Aorta (tissue), 5 donors: ENCODE measurements at regions of chr1 and their contacts with region 1.

Region 1: DNA sequence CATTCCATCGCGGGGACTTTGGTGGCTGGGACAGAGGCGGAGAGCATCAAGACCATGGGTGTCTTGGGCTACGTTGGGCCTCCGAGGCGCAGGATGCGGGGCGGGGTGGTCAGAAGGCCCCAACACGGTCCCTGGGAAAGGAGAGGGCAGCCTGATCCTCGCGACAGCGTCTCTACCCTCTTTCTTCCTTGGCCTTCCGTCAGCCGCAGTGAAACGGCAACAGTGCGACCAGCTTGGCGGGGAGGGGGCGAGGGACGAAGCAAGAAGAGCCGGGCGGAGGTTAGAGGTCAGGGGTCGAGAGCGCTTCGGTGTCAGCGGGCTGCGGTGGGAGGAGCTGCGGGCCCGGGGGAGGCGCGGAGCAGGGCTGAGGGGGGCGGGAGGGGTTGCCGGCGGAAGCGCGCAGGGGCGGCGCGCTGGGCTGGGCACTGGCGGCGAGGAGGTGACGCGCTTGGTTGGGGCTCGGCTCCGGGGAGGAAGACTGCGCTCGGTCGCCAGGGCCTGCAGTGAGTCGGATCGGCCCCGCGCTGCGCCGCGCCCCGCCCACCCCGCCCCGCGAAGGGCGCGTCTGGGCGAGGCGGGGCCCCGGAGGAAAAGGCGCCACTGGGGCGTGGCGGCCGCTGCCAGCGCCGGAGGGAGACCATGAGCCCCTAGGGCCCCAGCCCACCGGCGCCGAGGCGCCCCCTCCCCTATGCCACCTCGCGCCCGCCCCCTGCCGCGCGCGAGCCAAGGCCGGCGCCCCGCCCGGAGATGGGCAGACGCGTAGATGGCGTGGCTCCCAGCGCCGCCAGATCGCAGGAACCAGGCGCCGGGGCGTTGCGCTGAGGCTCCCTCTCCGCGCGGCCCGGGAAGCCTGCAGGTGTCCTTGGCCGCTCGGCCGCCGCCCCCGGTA is at the start of gene KCNC4:
- DNase-seq: peak; percentile 96 to 97
- ATAC-seq: peak; percentile 92
- H3K4me3 ChIP-seq: peak within 1 kb of the TSS; percentile 87 to 88
- H3K27ac ChIP-seq: peak within 1 kb of the TSS; percentile 32 to 85
- H3K4me1 ChIP-seq: no peaks in the 10 kb centered on the region
- H3K27me3 ChIP-seq: no peaks in the 10 kb centered on the region
- total RNA-seq, gene KCNC4: 18.2 to 22.6 TPM

Region 2: GRCh38 chr1:109722908-109723691 is 486.9 kb before region 1 on chr1:
- intact Hi-C with region 1: no loop called
- DNase-seq: no peak
- ATAC-seq: no peak
- H3K4me3 ChIP-seq: no peak overlapping the region
- H3K27ac ChIP-seq: no peak overlapping the region
- H3K4me1 ChIP-seq: no peaks in the 10 kb centered on the region
- H3K27me3 ChIP-seq: no peaks in the 10 kb centered on the region

Region 3: GRCh38 chr1:110118636-110119615 is 91.0 kb before region 1 on chr1:
- intact Hi-C with region 1: no loop called
- DNase-seq: peak in 1 of 2 donors; percentile 22
- ATAC-seq: no peak
- H3K4me3 ChIP-seq: no peak overlapping the region
- H3K27ac ChIP-seq: no peak overlapping the region
- H3K4me1 ChIP-seq: no peaks in the 10 kb centered on the region
- H3K27me3 ChIP-seq: no peaks in the 10 kb centered on the region

Region 4: GRCh38 chr1:110245876-110246620 is 36.1 kb after region 1 on chr1:
- intact Hi-C with region 1: loop called in 1 of 2 experiments (anchors 1 kb)
- DNase-seq: peak in 1 of 2 donors; percentile 37
- ATAC-seq: no peak
- H3K4me3 ChIP-seq: no peak overlapping the region
- H3K27ac ChIP-seq: no peak overlapping the region
- H3K4me1 ChIP-seq: no peaks in the 10 kb centered on the region
- H3K27me3 ChIP-seq: no peaks in the 10 kb centered on the region

Region 5: DNA sequence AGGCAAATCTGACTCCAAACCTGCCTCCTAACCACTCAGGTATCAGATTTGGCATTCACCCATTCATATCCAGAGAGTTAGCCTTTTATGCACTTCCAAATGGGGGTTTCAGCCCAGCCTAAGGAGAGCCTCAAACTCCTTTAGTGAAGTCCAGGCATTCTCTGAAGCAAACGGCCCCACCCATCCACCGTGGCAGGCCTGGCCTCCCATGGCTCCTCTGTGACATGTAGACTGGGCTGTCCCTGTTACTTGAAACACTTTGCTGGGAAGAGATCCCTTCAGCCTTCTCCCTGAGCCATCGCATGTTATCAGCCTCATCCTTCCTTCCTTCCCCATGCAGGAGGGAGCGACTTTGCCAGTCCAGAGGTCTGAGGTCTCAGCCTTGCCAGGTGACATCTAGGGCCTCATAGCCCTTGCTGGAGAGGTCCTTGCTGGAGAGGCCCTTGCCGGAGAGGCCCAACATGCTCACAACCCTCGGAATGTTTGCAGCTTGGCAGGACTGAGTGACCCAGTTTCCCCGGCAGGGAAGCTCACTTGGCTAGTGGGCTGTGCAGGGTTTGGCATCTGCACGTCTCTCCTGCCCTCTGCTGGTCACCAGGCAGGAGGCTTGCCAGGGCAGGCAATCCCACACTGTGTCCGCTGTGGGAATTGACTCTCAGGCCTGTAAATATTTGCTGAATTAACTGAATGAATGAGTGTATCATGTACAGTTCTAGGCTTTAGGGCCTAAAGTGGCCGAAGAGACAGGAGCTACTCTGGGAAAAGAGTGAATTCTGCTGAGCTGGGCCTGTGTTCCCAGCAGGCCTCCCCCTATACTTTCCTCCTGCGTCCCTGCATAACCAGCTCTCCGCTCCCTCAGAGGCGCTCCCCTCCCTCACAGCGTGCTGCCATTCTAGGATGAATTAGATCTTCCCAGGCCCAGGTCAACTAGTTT is 102.5 kb after region 1 on chr1:
- intact Hi-C with region 1: loop called (anchors 1 kb)
- DNase-seq: peak; percentile 88 to 91
- ATAC-seq: peak; percentile 94
- H3K4me3 ChIP-seq: no peak overlapping the region
- H3K27ac ChIP-seq: no peak overlapping the region
- H3K4me1 ChIP-seq: no peaks in the 10 kb centered on the region
- H3K27me3 ChIP-seq: no peaks in the 10 kb centered on the region

Region 6: GRCh38 chr1:110407260-110408210 is 197.6 kb after region 1 on chr1 and contains the start of gene LAMTOR5:
- intact Hi-C with region 1: loop called in 1 of 2 experiments (anchors 5 kb)
- DNase-seq: peak; percentile 96 to 98
- ATAC-seq: peak; percentile 97
- H3K4me3 ChIP-seq: peak within 1 kb of the TSS; percentile 81 to 82
- H3K27ac ChIP-seq: peak within 1 kb of the TSS; percentile 47 to 81
- H3K4me1 ChIP-seq: no peaks in the 10 kb centered on the region
- H3K27me3 ChIP-seq: no peaks in the 10 kb centered on the region
- total RNA-seq, gene LAMTOR5: 73.6 to 77.6 TPM

Region 7: DNA sequence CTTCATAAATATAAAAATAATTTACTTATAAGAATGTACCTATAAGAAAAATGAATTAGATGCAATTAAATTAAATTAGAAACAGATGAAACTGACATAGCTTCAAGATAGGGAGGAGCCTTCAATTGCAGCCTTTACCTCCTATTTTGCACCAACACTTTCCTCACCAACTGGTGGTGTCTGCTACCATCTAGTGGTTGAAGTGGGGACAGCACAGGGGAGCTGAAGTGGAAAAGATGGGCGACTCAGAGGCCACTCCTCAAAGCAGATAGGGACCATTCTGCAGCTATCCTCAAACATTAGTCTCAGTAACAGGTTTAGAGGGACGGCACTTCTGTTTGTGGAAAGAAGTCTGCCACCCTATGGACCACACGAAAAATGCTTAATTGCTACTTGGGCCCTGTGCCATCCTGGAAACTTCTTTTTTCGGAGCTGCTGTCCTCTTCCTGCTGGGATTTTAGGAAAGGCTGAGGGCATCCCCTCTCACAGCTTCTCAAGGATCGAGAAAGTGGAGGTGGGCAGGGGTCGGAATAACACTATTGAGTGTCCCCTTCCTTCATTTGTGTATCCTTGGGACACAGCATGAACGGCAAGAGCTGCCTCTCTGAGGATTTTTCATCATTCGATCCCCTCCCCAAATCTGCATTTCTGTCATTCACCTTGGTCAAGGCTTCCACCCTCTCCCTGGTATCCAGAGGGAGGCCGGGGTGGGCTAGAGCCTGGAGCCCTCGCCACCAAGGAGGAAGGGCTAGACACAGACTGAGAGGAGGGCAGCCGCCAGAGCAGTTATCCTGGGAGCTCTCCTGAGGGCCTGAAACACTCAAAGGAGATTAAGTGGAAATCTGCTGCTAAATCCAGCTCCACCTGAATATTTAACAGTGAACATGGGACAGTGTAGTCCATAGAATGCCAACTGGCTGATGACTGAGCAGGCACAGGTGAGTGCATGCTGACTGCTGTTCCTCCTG is 250.6 kb after region 1 on chr1:
- intact Hi-C with region 1: loop called in 1 of 2 experiments (anchors 2 kb)
- DNase-seq: peak; percentile 76 to 82
- ATAC-seq: peak; percentile 90
- H3K4me3 ChIP-seq: no peak overlapping the region
- H3K27ac ChIP-seq: no peak overlapping the region
- H3K4me1 ChIP-seq: no peaks in the 10 kb centered on the region
- H3K27me3 ChIP-seq: no peaks in the 10 kb centered on the region

Region 8: DNA sequence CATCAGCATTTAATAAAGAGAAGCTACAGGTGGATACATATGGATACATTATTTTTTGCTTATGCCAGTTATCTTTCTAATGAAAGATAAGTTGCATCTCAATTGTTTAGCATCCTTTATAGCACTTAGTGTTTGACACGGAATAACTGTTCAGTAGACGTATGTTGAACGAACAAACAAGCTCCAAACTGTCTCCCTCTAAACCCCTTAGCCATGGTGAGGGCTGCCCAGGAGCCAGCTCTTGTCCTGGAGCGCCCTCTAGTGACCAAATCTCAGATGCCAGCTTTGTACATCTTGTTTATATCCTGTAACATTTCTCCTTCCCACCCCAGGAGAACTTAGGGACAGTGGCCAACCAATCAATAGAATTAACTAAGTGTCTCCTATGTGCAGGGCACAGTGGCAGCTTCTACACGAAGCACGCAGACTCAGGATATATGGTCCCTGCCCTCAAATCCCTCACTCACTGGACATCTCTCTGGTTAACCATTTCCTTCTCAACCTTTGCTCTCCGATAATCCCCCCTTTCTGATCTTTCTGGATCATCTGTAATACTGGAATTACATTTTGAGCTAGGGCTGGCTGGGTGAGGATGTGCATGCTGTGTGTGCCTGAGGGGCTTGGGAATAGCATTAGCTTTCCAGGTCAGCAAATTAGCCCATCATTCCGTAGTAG is 286.1 kb after region 1 on chr1:
- intact Hi-C with region 1: loop called in 1 of 2 experiments (anchors 10 kb)
- DNase-seq: peak; percentile 78 to 86
- ATAC-seq: peak; percentile 75
- H3K4me3 ChIP-seq: no peak overlapping the region
- H3K27ac ChIP-seq: no peak overlapping the region
- H3K4me1 ChIP-seq: no peaks in the 10 kb centered on the region
- H3K27me3 ChIP-seq: no peaks in the 10 kb centered on the region

Region 9: GRCh38 chr1:110714374-110714995 is 504.5 kb after region 1 on chr1:
- intact Hi-C with region 1: no loop called
- DNase-seq: no peak
- ATAC-seq: no peak
- H3K4me3 ChIP-seq: no peak overlapping the region
- H3K27ac ChIP-seq: no peak overlapping the region
- H3K4me1 ChIP-seq: no peaks in the 10 kb centered on the region
- H3K27me3 ChIP-seq: peaks cover 0 to 3% of the 10 kb centered on the region in 2 donors